ENCODE measurements at regions of chr17 and their contacts with region 1.

Region 1: GRCh38 chr17:59753522-59754467 is 46.3 kb downstream of the VMP1 start:
- DNase-seq: no peak
- H3K4me3 Mint-ChIP-seq: peak overlapping the region; percentile 62
- H3K27ac Mint-ChIP-seq: peak overlapping the region; percentile 98
- H3K4me1 Mint-ChIP-seq: peaks cover 63% of the 10 kb centered on the region
- H3K27me3 Mint-ChIP-seq: no peaks in the 10 kb centered on the region

Region 2: DNA sequence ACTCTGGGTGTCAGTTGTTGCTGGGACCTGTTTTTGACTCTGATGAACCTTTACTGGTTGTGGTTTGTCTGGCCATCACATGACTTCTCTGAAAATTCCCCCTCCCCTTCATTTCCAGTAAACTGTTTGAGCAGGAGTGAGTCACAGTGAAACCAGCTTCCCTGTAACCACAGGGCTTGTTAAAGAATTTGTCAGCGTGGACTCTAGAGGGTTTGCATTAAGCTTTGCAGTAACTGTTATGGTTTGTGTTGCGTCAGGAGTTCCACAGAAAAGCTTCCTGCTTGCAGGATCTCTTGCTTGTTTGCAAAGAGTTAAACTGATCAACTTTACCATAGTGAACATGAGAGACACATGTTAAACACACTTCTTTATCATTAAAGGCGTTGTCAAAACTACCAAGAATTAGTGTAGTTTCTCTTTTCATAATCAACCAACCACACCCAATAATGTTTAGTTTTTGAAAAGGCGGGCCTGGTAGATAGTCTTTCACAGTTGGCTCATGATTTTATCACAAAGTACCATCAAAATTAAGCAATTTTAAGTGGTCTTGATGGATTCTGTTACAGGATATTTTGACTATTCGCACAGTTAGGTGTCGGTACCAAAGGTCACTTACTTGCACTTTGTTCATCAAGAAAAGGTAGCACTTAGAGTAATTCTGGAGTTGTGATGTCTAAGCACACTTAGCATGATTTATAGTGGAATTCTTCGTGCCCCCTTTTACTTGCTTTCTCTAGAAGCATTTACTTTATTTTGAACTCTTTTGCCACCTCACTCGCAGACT is 32.9 kb after region 1 on chr17:
- CTCF ChIA-PET with region 1: interaction called, 63 read pairs
- intact Hi-C with region 1: loop called (anchors 1 kb)
- DNase-seq: peak; percentile 93
- H3K4me3 Mint-ChIP-seq: peak overlapping the region; percentile 64
- H3K27ac Mint-ChIP-seq: peak overlapping the region; percentile 100
- H3K4me1 Mint-ChIP-seq: peaks cover 60% of the 10 kb centered on the region
- H3K27me3 Mint-ChIP-seq: no peaks in the 10 kb centered on the region

Region 3: DNA sequence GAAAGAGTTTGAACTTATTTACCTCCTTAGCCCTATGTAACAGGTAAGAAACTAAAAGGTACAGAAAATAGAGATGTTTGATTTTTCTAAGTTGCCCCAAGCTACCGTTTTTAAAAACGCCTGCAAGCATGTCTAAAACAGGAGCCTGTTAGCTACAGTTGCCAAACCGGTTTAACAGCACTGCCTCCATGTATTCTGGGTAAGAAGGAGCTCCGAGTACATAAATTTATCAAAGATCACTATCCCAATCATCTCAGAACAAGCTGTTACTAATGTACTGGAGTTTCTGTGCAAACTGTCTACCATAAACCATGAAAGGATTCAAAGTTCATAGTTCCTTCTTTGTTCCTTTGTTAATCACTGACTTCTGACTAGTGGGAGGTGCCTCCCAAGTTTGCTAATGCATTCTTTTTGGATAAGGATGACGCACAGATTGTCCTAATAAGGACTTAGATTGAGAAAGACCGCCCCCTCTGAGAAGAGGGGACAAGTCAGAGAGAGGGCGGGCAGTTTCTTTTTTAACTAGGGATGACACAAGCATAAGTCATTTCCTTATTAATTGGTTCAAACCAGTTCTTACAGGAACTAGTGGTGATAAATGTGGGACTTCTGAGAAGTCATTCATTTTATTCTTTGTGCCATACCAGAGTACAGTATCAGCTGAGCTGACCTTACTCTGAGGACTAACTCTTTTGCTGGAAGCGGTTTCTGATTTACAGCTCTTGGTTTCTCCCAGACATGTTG is 83.7 kb after region 1 on chr17:
- CTCF ChIA-PET with region 1: interaction called, 20 read pairs
- intact Hi-C with region 1: no loop called
- DNase-seq: peak; percentile 81
- H3K4me3 Mint-ChIP-seq: peak overlapping the region; percentile 100
- H3K27ac Mint-ChIP-seq: peak overlapping the region; percentile 100
- H3K4me1 Mint-ChIP-seq: peaks cover 56% of the 10 kb centered on the region
- H3K27me3 Mint-ChIP-seq: peaks cover 8% of the 10 kb centered on the region

Region 4: GRCh38 chr17:59853168-59853918 is 99.5 kb after region 1 on chr17:
- CTCF ChIA-PET with region 1: interaction called, 49 read pairs
- intact Hi-C with region 1: loop called (anchors 1 kb)
- DNase-seq: peak; percentile 86
- H3K4me3 Mint-ChIP-seq: peak overlapping the region; percentile 4
- H3K27ac Mint-ChIP-seq: peak overlapping the region; percentile 77
- H3K4me1 Mint-ChIP-seq: peaks cover 57% of the 10 kb centered on the region
- H3K27me3 Mint-ChIP-seq: no peaks in the 10 kb centered on the region

Region 5: DNA sequence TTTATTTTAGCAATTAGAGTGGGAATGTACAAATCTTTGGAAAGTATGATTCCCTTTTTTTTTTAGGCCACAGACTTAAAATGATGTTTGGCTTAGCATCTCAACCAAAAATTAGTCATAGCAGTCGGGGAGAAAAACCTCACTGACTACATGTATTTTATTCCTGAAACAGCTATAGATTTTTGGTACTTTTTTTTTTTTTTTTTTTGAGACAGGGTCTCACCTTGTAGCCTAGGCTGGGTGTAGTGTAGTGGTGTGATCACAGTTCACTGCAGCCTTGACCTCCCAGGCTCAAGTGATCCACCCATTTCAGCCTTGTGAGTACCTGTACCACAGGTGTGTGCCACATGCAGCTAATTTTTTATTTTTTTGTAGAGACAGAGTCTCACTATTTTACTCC is 187.3 kb after region 1 on chr17:
- CTCF ChIA-PET with region 1: interaction called, 3 read pairs
- intact Hi-C with region 1: loop called (anchors 2 kb)
- DNase-seq: peak; percentile 38
- H3K4me3 Mint-ChIP-seq: peak overlapping the region; percentile 39
- H3K27ac Mint-ChIP-seq: peak overlapping the region; percentile 98
- H3K4me1 Mint-ChIP-seq: peaks cover 59% of the 10 kb centered on the region
- H3K27me3 Mint-ChIP-seq: no peaks in the 10 kb centered on the region

Region 6: GRCh38 chr17:60077672-60078519 is 324.1 kb after region 1 on chr17:
- CTCF ChIA-PET with region 1: no interaction called
- intact Hi-C with region 1: no loop called
- DNase-seq: peak; percentile 49
- H3K4me3 Mint-ChIP-seq: peak overlapping the region; percentile 85
- H3K27ac Mint-ChIP-seq: peak overlapping the region; percentile 82
- H3K4me1 Mint-ChIP-seq: peaks cover 20% of the 10 kb centered on the region
- H3K27me3 Mint-ChIP-seq: peaks cover 2% of the 10 kb centered on the region

Region 7: GRCh38 chr17:60102632-60103096 is 348.9 kb after region 1 on chr17:
- CTCF ChIA-PET with region 1: no interaction called
- intact Hi-C with region 1: loop called (anchors 10 kb)
- DNase-seq: peak; percentile 62
- H3K4me3 Mint-ChIP-seq: peak overlapping the region; percentile 75
- H3K27ac Mint-ChIP-seq: no peak overlapping the region
- H3K4me1 Mint-ChIP-seq: peaks cover 11% of the 10 kb centered on the region
- H3K27me3 Mint-ChIP-seq: peaks cover 14% of the 10 kb centered on the region